Sigmoid colon (tissue), 7 donors: ENCODE measurements at regions of chr7 and their contacts with region 1.

Region 1: GRCh38 chr7:33062782-33063443 is 337 bp upstream of the NT5C3A start:
- DNase-seq: peak; percentile 96
- H3K4me3 ChIP-seq: peak overlapping the region; percentile 64 to 74 (median 68)
- H3K27ac ChIP-seq: peak overlapping the region; percentile 89 to 97 (median 92)
- H3K4me1 ChIP-seq: peaks cover 0 to 30% (median 17%) of the 10 kb centered on the region in 4 donors
- H3K27me3 ChIP-seq: no peaks in the 10 kb centered on the region
- CTCF ChIP-seq: no peak
- EP300 ChIP-seq: no peak
- POLR2A ChIP-seq: peak; percentile 53 to 54

Region 2: DNA sequence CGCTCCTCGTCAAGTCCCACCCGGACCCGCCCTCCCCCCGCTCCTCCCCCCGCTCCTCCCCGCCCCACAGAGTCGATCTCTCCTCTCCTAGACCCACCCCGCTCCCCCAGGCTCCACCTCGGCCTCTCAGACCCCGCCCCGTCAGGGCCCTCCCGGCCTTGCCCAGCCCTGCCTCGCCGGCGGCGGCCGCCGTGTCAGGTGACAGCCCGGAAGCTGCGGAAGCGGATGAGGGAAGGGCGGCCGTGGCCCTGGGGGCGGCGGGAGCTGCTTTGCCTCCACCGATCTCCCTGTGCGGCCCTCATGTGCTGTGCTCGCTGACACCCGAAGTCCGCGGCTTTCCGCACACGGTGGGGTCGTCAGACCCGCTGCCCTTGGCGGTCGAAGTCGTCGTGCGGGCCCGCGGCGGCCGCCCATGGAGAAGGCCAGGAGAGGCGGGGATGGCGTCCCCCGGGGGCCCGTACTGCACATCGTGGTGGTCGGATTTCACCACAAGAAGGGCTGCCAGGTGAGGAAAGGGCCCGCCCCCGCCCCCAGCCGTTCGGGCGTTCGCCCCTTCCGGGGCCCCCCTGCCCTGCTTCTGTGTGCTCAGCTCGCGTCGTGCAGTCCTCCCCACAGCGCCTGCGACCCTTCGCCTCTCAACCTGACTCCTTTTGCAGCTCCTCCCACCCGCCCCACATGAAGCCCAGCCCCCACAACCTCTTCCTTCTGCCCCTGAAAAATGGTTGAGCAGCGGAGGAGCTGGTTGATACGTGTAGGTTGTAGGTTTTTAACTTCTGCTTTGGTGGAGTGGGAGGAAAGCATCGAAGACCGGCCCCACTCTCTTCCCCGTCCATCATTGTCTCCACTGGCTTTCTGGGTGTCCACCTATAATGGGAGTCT is 567.4 kb before region 1 on chr7 and contains the start of gene AVL9:
- intact Hi-C with region 1: loop called (anchors 10 kb)
- DNase-seq: peak; percentile 99
- H3K4me3 ChIP-seq: peak within 1 kb of the TSS; percentile 79 to 99 (median 94)
- H3K27ac ChIP-seq: peak within 1 kb of the TSS; percentile 92 to 99 (median 97)
- H3K4me1 ChIP-seq: peaks cover 0 to 31% (median 18%) of the 10 kb centered on the region in 4 donors
- H3K27me3 ChIP-seq: no peaks in the 10 kb centered on the region
- CTCF ChIP-seq: no peak
- EP300 ChIP-seq: peak in 1 of 4 donors; percentile 17
- POLR2A ChIP-seq: peak; percentile 77 to 89
- total RNA-seq, gene AVL9: 18.5 to 25.0 (median 21.0) TPM

Region 3: GRCh38 chr7:32957326-32958045 is 105.4 kb before region 1 on chr7 and contains the start of gene FKBP9:
- intact Hi-C with region 1: loop called (anchors 5 kb)
- DNase-seq: peak; percentile 89
- H3K4me3 ChIP-seq: peak within 1 kb of the TSS; percentile 61 to 96 (median 82)
- H3K27ac ChIP-seq: peak within 1 kb of the TSS; percentile 90 to 93 (median 92)
- H3K4me1 ChIP-seq: peaks cover 0 to 16% (median 11%) of the 10 kb centered on the region in 4 donors
- H3K27me3 ChIP-seq: no peaks in the 10 kb centered on the region
- CTCF ChIP-seq: no peak
- EP300 ChIP-seq: no peak
- POLR2A ChIP-seq: peak in 1 of 2 donors; percentile 59
- total RNA-seq, gene FKBP9: 79.6 to 161 (median 114) TPM

Region 4: DNA sequence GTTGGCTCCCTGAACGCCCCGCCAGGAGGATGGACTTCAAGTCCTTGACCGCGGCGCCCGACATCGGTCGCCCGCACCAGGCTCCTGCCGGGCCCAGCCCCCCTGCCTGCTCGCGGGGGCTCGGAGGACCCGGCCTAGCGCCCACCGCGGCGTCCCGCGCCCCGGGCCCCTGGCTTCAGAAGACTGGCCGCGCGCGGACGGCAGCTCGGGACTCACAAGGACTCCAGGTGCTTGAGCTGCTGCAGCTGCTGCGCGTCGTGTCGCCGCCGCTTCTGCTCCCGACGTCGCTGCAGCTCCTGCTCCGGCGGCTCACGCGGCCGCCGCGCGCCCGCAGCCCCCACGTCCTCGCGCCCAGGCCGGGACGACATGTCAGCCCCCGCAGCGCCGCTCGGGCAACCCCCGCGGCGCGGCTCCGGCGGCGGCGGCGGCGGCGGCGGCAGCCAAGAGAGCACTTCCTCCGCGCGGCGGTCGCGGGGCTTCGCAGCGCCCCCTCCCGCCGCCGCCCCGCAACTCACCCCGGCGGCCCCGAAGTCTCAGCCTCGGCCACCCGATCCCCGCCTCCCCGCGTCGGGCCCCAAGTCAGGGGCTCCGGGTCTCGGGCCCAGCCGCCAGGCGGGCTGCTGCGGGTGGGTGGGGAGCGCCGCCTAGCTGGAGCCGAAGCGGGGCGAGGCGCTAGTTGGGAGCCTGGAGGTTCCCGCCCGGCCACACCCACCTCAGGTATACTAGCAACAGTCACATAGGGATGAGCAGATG is 46.3 kb after region 1 on chr7 and contains the start of gene RP9:
- intact Hi-C with region 1: loop called (anchors 2 kb)
- DNase-seq: peak; percentile 77
- H3K4me3 ChIP-seq: peak within 1 kb of the TSS; percentile 60 to 99 (median 97)
- H3K27ac ChIP-seq: peak within 1 kb of the TSS; percentile 82 to 89 (median 88)
- H3K4me1 ChIP-seq: peaks cover 0 to 39% (median 30%) of the 10 kb centered on the region in 4 donors
- H3K27me3 ChIP-seq: no peaks in the 10 kb centered on the region
- CTCF ChIP-seq: peak in 2 of 4 experiments; percentile 30 to 63
- EP300 ChIP-seq: no peak
- POLR2A ChIP-seq: no peak
- total RNA-seq, gene RP9: 6.9 to 24.6 (median 9.2) TPM